ENCODE measurements at regions of chr9 and their contacts with region 1.

Region 1: DNA sequence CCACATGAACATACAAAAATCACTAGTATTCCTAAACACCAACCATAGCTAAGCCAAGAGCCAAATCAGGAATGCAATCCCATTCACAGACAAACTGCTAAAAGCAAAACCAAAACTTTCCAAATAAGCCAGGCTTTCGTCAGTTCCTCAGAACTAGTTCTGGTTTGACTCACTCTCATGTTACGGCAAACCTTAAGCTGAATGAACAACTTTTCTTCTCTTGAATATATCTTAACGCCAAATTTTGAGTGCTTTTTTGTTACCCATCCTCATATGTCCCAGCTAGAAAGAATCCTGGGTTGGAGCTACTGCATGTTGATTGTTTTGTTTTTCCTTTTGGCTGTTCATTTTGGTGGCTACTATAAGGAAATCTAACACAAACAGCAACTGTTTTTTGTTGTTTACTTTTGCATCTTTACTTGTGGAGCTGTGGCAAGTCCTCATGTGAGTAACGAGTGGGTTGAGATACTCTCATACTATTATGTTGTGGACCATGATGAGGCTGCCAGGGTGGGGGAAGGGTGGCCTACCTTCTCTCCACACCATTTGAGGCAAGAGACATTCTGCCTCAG is at the start of gene PDCD1LG2:
- DNase-seq: no peak
- H3K4me3 Mint-ChIP-seq: peak within 1 kb of the TSS; percentile 80
- H3K27ac Mint-ChIP-seq: peak within 1 kb of the TSS; percentile 95
- H3K4me1 Mint-ChIP-seq: peaks cover 55% of the 10 kb centered on the region
- H3K27me3 Mint-ChIP-seq: no peaks in the 10 kb centered on the region
- total RNA-seq, gene PDCD1LG2: 1.7 and 2.0 TPM in 2 replicates

Region 2: DNA sequence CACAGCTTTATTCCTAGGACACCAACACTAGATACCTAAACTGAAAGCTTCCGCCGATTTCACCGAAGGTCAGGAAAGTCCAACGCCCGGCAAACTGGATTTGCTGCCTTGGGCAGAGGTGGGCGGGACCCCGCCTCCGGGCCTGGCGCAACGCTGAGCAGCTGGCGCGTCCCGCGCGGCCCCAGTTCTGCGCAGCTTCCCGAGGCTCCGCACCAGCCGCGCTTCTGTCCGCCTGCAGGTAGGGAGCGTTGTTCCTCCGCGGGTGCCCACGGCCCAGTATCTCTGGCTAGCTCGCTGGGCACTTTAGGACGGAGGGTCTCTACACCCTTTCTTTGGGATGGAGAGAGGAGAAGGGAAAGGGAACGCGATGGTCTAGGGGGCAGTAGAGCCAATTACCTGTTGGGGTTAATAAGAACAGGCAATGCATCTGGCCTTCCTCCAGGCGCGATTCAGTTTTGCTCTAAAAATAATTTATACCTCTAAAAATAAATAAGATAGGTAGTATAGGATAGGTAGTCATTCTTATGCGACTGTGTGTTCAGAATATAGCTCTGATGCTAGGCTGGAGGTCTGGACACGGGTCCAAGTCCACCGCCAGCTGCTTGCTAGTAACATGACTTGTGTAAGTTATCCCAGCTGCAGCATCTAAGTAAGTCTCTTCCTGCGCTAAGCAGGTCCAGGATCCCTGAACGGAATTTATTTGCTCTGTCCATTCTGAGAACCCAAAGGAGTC is 59.9 kb before region 1 on chr9 and contains the start of gene CD274:
- intact Hi-C with region 1: loop called (anchors 1 kb)
- DNase-seq: peak; percentile 77
- H3K4me3 Mint-ChIP-seq: peak within 1 kb of the TSS; percentile 97
- H3K27ac Mint-ChIP-seq: peak within 1 kb of the TSS; percentile 92
- H3K4me1 Mint-ChIP-seq: peaks cover 71% of the 10 kb centered on the region
- H3K27me3 Mint-ChIP-seq: no peaks in the 10 kb centered on the region
- total RNA-seq, gene CD274: 36.7 and 40.5 TPM in 2 replicates

Region 3: DNA sequence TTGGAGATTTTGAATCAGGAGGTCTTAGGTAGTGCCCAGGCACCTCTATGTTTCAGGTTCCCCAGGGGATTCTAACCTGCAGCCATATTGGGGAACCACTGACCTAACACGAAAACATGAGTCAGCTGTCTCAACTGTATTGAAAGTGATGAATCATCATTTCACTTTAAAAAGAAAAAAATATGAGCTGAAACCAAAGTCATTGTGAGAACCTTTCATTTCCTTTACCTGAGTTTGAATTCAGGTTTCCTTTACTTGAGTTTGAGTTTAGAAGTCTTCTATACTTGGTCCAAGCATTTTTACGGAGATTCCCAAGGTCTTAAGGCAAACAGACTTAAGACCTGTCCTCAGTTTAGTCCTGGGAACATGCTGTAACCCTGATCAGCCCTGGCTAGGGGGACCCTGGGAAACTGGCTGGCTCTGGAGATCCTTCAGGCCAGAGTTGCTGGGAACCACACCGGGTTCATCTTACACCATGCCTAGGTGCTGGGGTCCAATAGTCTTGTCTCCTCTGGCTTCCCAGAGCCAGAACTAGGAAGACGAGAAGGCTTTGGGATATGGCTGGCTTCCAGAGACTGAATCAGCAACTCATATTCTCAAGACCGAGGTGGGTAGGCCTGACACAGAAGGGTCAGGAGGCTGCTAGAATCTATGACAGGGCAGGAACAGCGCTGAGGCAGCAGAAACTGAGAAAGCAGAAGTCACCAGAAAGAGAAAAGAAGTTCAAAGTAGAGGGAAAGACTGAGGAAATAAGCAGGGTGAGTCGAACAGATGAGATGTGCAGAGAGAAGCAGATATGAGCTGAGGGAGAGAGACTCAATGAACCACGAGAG is 16.6 kb before region 1 on chr9:
- intact Hi-C with region 1: loop called (anchors 1 kb)
- DNase-seq: no peak
- H3K4me3 Mint-ChIP-seq: no peak overlapping the region
- H3K27ac Mint-ChIP-seq: peak overlapping the region; percentile 43
- H3K4me1 Mint-ChIP-seq: peaks cover 20% of the 10 kb centered on the region
- H3K27me3 Mint-ChIP-seq: no peaks in the 10 kb centered on the region

Region 4: DNA sequence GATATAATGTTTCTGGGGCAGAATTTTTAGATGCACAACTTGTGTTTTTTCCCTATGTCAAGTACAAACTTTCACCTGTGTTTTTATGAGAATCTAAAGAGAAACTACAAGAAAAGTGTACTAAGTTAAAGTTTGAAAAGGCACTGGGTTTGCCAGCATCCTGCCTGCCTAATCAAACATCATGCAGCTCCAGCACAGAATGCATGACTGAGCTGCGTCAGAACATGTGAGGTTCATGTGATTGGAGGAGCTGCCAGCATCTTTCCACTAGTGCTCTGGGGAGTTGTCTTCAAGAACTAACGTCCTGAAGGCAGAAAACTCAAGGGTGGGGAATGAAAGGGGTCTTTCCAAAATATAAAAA is 72.4 kb after region 1 on chr9:
- intact Hi-C with region 1: loop called (anchors 1 kb)
- DNase-seq: peak; percentile 46
- H3K4me3 Mint-ChIP-seq: no peak overlapping the region
- H3K27ac Mint-ChIP-seq: peak overlapping the region; percentile 88
- H3K4me1 Mint-ChIP-seq: peaks cover 69% of the 10 kb centered on the region
- H3K27me3 Mint-ChIP-seq: no peaks in the 10 kb centered on the region

Measured in activated T-helper 2 cell treated with anti-CD3 and anti-CD28 coated beads, Interferon-gamma antibody, Interleukin-2, Interleukin-4, amounts not matched to agents 10 μg/mL and 5 μg/mL and 100 μg/mL, durations not matched to agents 14 hours and 24 hours and 36 hours (primary cell).